GM12878 (cell line): ENCODE measurements at regions of chr6 and their contacts with region 1.

Region 1: DNA sequence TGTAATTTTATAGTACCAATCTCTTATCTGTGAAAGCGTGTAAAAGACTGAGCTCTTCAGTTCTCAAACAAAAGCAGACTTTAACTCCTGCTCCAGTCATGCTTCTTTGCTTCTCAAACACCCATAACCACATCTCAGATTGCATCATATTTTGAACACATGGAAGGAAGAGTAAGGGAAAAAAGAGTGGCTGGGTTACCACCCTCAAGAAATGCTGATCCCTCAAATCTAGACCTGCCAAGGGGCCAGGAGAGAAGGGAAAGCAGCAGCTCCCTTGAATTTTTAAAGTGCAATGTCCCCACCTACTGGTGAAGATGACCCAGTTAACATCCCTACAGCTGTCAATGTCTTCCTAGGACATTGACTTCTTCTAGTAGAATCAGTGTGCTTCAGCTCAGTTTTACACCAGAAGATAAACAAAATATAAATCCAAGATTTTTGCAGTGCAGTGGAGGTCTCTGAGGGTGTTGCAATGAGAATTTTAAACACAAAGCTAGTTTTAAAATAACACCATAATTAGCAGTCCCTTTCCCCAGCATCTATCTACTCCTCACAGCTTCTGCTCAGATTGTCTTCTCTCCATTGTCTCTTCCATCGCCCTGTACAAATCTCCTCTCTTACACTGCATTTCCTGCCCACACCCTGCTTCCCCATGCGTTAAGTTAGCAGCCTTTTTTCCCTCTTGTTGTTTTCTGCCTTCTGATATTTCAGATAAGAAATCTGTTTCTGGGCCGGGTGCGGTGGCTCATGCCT is 22.6 kb upstream of the HLA-DQB2 start:
- DNase-seq: peak; percentile 27
- ATAC-seq: peak; percentile 94
- H3K4me3 ChIP-seq: no peak overlapping the region
- H3K27ac ChIP-seq: no peak overlapping the region
- H3K4me1 ChIP-seq: no peaks in the 10 kb centered on the region
- H3K27me3 ChIP-seq: no peaks in the 10 kb centered on the region; a peak in 1 of 4 replicates
- CTCF ChIP-seq: peak; percentile 64 to 78 (median 69)
- EP300 ChIP-seq: no peak
- POLR2A ChIP-seq: no peak
- RAD21 ChIP-seq: peak; percentile 80

Region 2: GRCh38 chr6:32244946-32245398 is 541.0 kb before region 1 on chr6:
- CTCF ChIA-PET with region 1: interaction called, 33 read pairs
- POLR2A ChIA-PET with region 1: interaction called, 3 read pairs
- RAD21 ChIA-PET with region 1: interaction called, 6 read pairs
- SMC1A ChIA-PET with region 1: interaction called, 22 read pairs
- in situ Hi-C with region 1: no loop called
- intact Hi-C with region 1: no loop called
- DNase-seq: no peak
- ATAC-seq: peak; percentile 87
- H3K4me3 ChIP-seq: no peak overlapping the region; the same call in 1 of the 2 replicates
- H3K27ac ChIP-seq: no peak overlapping the region
- H3K4me1 ChIP-seq: no peaks in the 10 kb centered on the region
- H3K27me3 ChIP-seq: no peaks in the 10 kb centered on the region; a peak in 1 of 4 replicates
- CTCF ChIP-seq: peak; percentile 85 to 92 (median 87)
- EP300 ChIP-seq: no peak
- POLR2A ChIP-seq: no peak
- RAD21 ChIP-seq: peak; percentile 86

Region 3: GRCh38 chr6:32424589-32425300 is 361.2 kb before region 1 on chr6:
- CTCF ChIA-PET with region 1: interaction called, 66 read pairs
- POLR2A ChIA-PET with region 1: no interaction called
- RAD21 ChIA-PET with region 1: interaction called, 60 read pairs
- SMC1A ChIA-PET with region 1: interaction called, 63 read pairs
- in situ Hi-C with region 1: no loop called
- intact Hi-C with region 1: no loop called
- DNase-seq: no peak
- ATAC-seq: no peak
- H3K4me3 ChIP-seq: no peak overlapping the region
- H3K27ac ChIP-seq: no peak overlapping the region
- H3K4me1 ChIP-seq: no peaks in the 10 kb centered on the region
- H3K27me3 ChIP-seq: peaks cover 1 to 3% of the 10 kb centered on the region in 2 experiments; a peak in 2 of 4 replicates
- CTCF ChIP-seq: no peak
- EP300 ChIP-seq: no peak
- POLR2A ChIP-seq: no peak
- RAD21 ChIP-seq: no peak

Region 4: GRCh38 chr6:32439602-32440214 is 346.2 kb before region 1 on chr6 and contains the start of gene HLA-DRA:
- CTCF ChIA-PET with region 1: interaction called, 13 read pairs
- POLR2A ChIA-PET with region 1: no interaction called
- RAD21 ChIA-PET with region 1: interaction called, 11 read pairs
- SMC1A ChIA-PET with region 1: interaction called, 63 read pairs
- in situ Hi-C with region 1: no loop called
- intact Hi-C with region 1: loop called (anchors 5 kb)
- DNase-seq: peak; percentile 99
- ATAC-seq: peak; percentile 71
- H3K4me3 ChIP-seq: peak within 1 kb of the TSS; percentile 99
- H3K27ac ChIP-seq: peak within 1 kb of the TSS; percentile 100
- H3K4me1 ChIP-seq: peaks cover 29% of the 10 kb centered on the region
- H3K27me3 ChIP-seq: no peaks in the 10 kb centered on the region
- CTCF ChIP-seq: no peak
- EP300 ChIP-seq: peak; percentile 66 to 68; a peak in 3 of 4 replicates
- POLR2A ChIP-seq: peak; percentile 95
- RAD21 ChIP-seq: no peak
- polyA plus RNA-seq, gene HLA-DRA: 4,131 to 6,024 TPM

Region 5: GRCh38 chr6:32700391-32701040 is 85.4 kb before region 1 on chr6:
- CTCF ChIA-PET with region 1: interaction called, 81 read pairs
- POLR2A ChIA-PET with region 1: interaction called, 5 read pairs
- RAD21 ChIA-PET with region 1: interaction called, 32 read pairs
- SMC1A ChIA-PET with region 1: interaction called, 38 read pairs
- in situ Hi-C with region 1: no loop called
- intact Hi-C with region 1: loop called (anchors 2 kb)
- DNase-seq: no peak
- ATAC-seq: peak; percentile 93
- H3K4me3 ChIP-seq: no peak overlapping the region
- H3K27ac ChIP-seq: no peak overlapping the region
- H3K4me1 ChIP-seq: no peaks in the 10 kb centered on the region
- H3K27me3 ChIP-seq: peaks cover 0 to 3% of the 10 kb centered on the region in 2 experiments; a peak in 2 of 4 replicates
- CTCF ChIP-seq: peak; percentile 65
- EP300 ChIP-seq: no peak
- POLR2A ChIP-seq: no peak
- RAD21 ChIP-seq: peak; percentile 76

Region 6: GRCh38 chr6:32718879-32719278 is 67.1 kb before region 1 on chr6:
- CTCF ChIA-PET with region 1: interaction called, 21 read pairs
- POLR2A ChIA-PET with region 1: no interaction called
- RAD21 ChIA-PET with region 1: interaction called, 6 read pairs
- SMC1A ChIA-PET with region 1: interaction called, 11 read pairs
- in situ Hi-C with region 1: no loop called
- intact Hi-C with region 1: no loop called
- DNase-seq: no peak
- ATAC-seq: peak; percentile 51
- H3K4me3 ChIP-seq: no peak overlapping the region
- H3K27ac ChIP-seq: no peak overlapping the region
- H3K4me1 ChIP-seq: no peaks in the 10 kb centered on the region
- H3K27me3 ChIP-seq: no peaks in the 10 kb centered on the region
- CTCF ChIP-seq: no peak
- EP300 ChIP-seq: no peak
- POLR2A ChIP-seq: no peak
- RAD21 ChIP-seq: no peak

Region 7: GRCh38 chr6:32838114-32838958 is 52.4 kb after region 1 on chr6 and contains the start of gene TAP2:
- CTCF ChIA-PET with region 1: interaction called, 22 read pairs
- POLR2A ChIA-PET with region 1: interaction called, 4 read pairs
- RAD21 ChIA-PET with region 1: interaction called, 11 read pairs
- SMC1A ChIA-PET with region 1: interaction called, 4 read pairs
- in situ Hi-C with region 1: no loop called
- intact Hi-C with region 1: no loop called
- DNase-seq: no peak
- ATAC-seq: peak; percentile 85
- H3K4me3 ChIP-seq: peak within 1 kb of the TSS; percentile 95
- H3K27ac ChIP-seq: peak within 1 kb of the TSS; percentile 75
- H3K4me1 ChIP-seq: peaks cover 60% of the 10 kb centered on the region
- H3K27me3 ChIP-seq: no peaks in the 10 kb centered on the region
- CTCF ChIP-seq: peak; percentile 89 to 97 (median 96); a peak in 5 of 6 replicates
- EP300 ChIP-seq: no peak
- POLR2A ChIP-seq: peak; percentile 86
- RAD21 ChIP-seq: peak; percentile 98
- polyA plus RNA-seq, gene TAP2: 5.3 to 6.7 TPM

Region 8: GRCh38 chr6:32894080-32895005 is 108.4 kb after region 1 on chr6:
- CTCF ChIA-PET with region 1: no interaction called
- POLR2A ChIA-PET with region 1: no interaction called
- RAD21 ChIA-PET with region 1: no interaction called
- SMC1A ChIA-PET with region 1: no interaction called
- in situ Hi-C with region 1: no loop called
- intact Hi-C with region 1: no loop called
- DNase-seq: peak; percentile 91
- ATAC-seq: peak; percentile 98
- H3K4me3 ChIP-seq: peak overlapping the region; percentile 81
- H3K27ac ChIP-seq: peak overlapping the region; percentile 90
- H3K4me1 ChIP-seq: peaks cover 12% of the 10 kb centered on the region
- H3K27me3 ChIP-seq: no peaks in the 10 kb centered on the region
- CTCF ChIP-seq: no peak; a peak in 1 of 6 replicates
- EP300 ChIP-seq: no peak
- POLR2A ChIP-seq: peak; percentile 83
- RAD21 ChIP-seq: no peak